MCF 10A (cell line): ENCODE measurements at regions of chr2 and their contacts with region 1.

Region 1: GRCh38 chr2:9753276-9753600 is 90.0 kb upstream of the TAF1B start:
- DNase-seq: peak; percentile 97
- H3K4me3 Mint-ChIP-seq: peak overlapping the region; percentile 69
- H3K27ac Mint-ChIP-seq: peak overlapping the region; percentile 82
- H3K4me1 Mint-ChIP-seq: peaks cover 36% of the 10 kb centered on the region
- H3K27me3 Mint-ChIP-seq: no peaks in the 10 kb centered on the region
- CTCF ChIP-seq: no peak

Region 2: GRCh38 chr2:9474361-9474967 is 278.8 kb before region 1 on chr2 and contains the start of gene IAH1:
- CTCF ChIA-PET with region 1: no interaction called
- POLR2A ChIA-PET with region 1: interaction called, 11 read pairs
- intact Hi-C with region 1: no loop called
- DNase-seq: peak; percentile 48
- H3K4me3 Mint-ChIP-seq: peak within 1 kb of the TSS; percentile 74
- H3K27ac Mint-ChIP-seq: peak within 1 kb of the TSS; percentile 46
- H3K4me1 Mint-ChIP-seq: peaks cover 11% of the 10 kb centered on the region
- H3K27me3 Mint-ChIP-seq: no peaks in the 10 kb centered on the region
- CTCF ChIP-seq: no peak
- total RNA-seq, gene IAH1: 74.7 and 82.3 TPM in 2 replicates

Region 3: DNA sequence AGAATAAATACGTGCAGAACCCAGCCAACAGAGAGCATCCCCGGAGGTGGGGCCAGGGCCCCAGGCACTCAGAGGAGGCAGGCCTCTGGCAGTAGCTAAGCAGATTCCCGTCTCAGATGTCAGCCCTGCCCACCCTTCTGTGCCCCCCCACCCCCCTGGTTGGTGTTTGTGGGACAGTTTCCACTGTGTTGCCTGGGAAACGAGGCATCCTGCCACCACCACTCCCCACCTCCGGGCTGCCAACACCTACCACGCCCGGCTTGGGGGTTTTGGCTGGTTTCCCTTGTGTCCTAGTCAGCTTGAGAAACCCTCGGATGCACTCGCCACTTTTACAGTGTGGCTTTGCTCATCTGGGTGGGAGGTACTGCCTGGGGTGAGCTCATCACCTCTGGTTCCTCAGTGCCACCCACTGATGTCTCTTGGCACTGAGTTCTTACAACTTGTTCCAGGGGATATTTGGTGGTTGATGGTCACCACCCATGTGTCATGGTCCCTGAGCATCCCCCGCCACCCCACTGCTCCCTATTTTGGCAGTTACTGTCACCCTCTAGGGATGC is 50.1 kb before region 1 on chr2:
- CTCF ChIA-PET with region 1: no interaction called
- POLR2A ChIA-PET with region 1: interaction called, 3 read pairs
- intact Hi-C with region 1: loop called (anchors 1 kb)
- DNase-seq: peak; percentile 97
- H3K4me3 Mint-ChIP-seq: no peak overlapping the region
- H3K27ac Mint-ChIP-seq: peak overlapping the region; percentile 49
- H3K4me1 Mint-ChIP-seq: peaks cover 25% of the 10 kb centered on the region
- H3K27me3 Mint-ChIP-seq: no peaks in the 10 kb centered on the region
- CTCF ChIP-seq: no peak